Activated CD8-positive, alpha-beta T cell treated with anti-CD3 and anti-CD28 coated beads for 36 hours (primary cell): ENCODE measurements at regions of chr5 and their contacts with region 1.

Region 1: GRCh38 chr5:91311697-91312501 is 71.2 kb downstream of the ARRDC3 start:
- DNase-seq: peak; percentile 87
- ATAC-seq: peak; percentile 79
- H3K4me3 Mint-ChIP-seq: peak overlapping the region; percentile 75
- H3K27ac Mint-ChIP-seq: peak overlapping the region; percentile 90
- H3K4me1 Mint-ChIP-seq: peaks cover 45% of the 10 kb centered on the region
- H3K27me3 Mint-ChIP-seq: no peaks in the 10 kb centered on the region
- CTCF ChIP-seq: no peak

Region 2: GRCh38 chr5:90640484-90641059 is 671.3 kb before region 1 on chr5:
- CTCF ChIA-PET with region 1: no interaction called
- POLR2A ChIA-PET with region 1: no interaction called
- intact Hi-C with region 1: no loop called
- DNase-seq: no peak
- ATAC-seq: no peak
- H3K4me3 Mint-ChIP-seq: no peak overlapping the region
- H3K27ac Mint-ChIP-seq: no peak overlapping the region
- H3K4me1 Mint-ChIP-seq: no peaks in the 10 kb centered on the region
- H3K27me3 Mint-ChIP-seq: no peaks in the 10 kb centered on the region
- CTCF ChIP-seq: no peak

Region 3: DNA sequence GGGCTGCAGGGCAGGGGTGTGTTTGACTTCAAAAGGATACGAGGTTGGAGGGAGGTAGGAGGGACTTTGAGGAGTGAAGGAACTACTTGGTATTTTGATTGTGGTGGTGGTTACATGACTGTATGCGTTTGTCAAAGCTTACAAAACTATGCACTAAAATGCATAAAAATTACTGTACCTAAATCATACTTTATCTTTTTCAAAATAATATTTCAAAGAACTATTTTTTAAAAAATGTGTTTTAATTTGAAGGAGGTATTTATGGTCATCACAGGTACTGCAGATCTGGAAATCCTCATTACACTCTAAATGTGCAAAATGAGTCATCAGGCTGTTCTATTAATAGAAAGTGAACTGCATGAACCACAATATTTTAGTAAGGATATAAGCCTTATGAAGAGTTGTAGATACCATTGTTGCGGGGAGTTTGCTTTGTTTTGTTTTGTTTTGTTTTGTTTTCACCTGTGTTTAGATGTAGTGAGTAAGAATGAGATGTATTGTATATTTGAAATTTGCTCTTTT is 45.7 kb before region 1 on chr5:
- CTCF ChIA-PET with region 1: no interaction called
- POLR2A ChIA-PET with region 1: no interaction called
- intact Hi-C with region 1: loop called (anchors 5 kb)
- DNase-seq: no peak
- ATAC-seq: peak; percentile 87
- H3K4me3 Mint-ChIP-seq: no peak overlapping the region
- H3K27ac Mint-ChIP-seq: no peak overlapping the region
- H3K4me1 Mint-ChIP-seq: peaks cover 22% of the 10 kb centered on the region
- H3K27me3 Mint-ChIP-seq: no peaks in the 10 kb centered on the region
- CTCF ChIP-seq: peak; percentile 55

Region 4: DNA sequence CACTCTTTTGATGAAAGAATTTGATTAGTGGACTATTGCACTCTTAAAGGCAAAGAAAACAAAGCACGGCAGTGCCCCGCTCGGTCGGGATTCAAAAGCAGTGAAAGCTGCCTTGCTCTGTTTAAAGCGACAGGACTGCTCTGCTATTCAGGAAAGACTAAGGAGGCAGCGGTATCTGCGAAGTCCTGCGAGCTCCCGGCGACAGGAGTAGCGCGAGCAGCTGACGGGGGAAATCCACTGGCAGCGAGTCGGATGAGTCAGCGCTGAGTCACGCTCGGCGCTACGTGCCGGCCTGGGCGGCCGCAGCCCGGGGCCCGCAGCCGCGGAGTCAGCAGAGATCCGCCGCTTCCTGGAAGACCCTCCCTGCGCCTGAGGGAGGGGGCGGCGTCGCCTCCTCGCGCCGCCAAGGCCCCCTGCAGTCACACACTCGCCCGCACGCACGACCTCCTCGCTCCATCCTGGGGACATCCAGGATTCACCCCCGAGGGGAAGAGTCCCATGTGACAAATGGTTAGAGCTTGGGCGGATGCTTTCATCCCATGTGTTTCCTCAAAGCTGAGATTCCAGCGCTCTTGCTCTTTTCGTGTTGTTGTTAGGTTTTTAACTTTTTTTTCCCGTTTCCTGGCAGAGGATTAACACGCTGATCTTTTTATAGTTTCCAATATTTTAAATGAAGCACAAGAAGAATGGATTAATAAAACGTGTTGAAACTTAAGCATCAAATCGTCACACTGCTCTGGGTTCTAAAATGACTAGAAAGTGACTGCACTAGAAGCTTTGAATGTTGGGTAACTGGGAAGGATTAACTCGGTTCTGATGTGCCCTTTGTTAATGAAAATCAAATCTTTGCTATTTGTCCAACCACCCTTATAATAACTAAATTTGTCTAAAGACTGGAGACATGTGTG is 31.3 kb before region 1 on chr5:
- CTCF ChIA-PET with region 1: interaction called, 6 read pairs
- POLR2A ChIA-PET with region 1: interaction called, 10 read pairs
- intact Hi-C with region 1: loop called (anchors 2 kb)
- DNase-seq: peak; percentile 93
- ATAC-seq: peak; percentile 81
- H3K4me3 Mint-ChIP-seq: peak overlapping the region; percentile 85
- H3K27ac Mint-ChIP-seq: peak overlapping the region; percentile 98
- H3K4me1 Mint-ChIP-seq: peaks cover 47% of the 10 kb centered on the region
- H3K27me3 Mint-ChIP-seq: no peaks in the 10 kb centered on the region
- CTCF ChIP-seq: no peak

Region 5: DNA sequence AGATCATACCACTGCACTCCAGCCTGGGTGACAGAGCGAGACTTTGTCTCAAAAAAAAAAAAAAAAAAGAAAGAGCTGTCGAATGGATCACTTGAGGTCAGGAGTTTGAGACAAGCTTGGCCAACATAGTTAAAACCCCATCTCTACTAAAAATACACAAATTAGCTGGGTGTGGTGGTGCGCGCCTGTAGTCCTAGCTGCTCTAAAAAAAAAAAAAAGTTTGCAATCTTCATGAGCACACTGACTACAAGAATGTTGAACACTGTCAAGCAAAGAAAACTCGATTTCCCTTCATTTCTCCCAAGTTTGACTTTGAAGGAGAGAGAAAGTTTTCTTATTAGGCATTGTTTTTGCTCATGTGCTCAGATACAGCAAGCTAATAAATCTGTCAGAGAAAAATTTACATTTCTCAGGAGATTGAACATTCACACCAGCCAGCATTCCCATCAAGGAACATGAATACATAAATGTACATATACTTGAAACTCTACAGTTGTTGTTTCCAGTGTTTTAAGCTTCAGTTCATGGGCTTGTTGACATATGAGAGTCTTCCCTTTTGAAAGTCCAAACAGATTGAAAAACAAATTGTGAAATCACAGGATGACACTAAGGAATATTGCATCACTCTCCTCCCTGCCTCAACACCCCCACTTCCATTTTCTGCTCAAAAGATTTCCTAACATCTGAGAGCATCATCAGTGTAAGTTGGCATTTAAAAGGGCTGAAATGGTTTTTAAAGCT is 10.6 kb before region 1 on chr5:
- CTCF ChIA-PET with region 1: interaction called, 4 read pairs
- POLR2A ChIA-PET with region 1: interaction called, 11 read pairs
- intact Hi-C with region 1: no loop called
- DNase-seq: no peak
- ATAC-seq: no peak
- H3K4me3 Mint-ChIP-seq: no peak overlapping the region
- H3K27ac Mint-ChIP-seq: no peak overlapping the region
- H3K4me1 Mint-ChIP-seq: no peaks in the 10 kb centered on the region
- H3K27me3 Mint-ChIP-seq: no peaks in the 10 kb centered on the region
- CTCF ChIP-seq: no peak

Region 6: DNA sequence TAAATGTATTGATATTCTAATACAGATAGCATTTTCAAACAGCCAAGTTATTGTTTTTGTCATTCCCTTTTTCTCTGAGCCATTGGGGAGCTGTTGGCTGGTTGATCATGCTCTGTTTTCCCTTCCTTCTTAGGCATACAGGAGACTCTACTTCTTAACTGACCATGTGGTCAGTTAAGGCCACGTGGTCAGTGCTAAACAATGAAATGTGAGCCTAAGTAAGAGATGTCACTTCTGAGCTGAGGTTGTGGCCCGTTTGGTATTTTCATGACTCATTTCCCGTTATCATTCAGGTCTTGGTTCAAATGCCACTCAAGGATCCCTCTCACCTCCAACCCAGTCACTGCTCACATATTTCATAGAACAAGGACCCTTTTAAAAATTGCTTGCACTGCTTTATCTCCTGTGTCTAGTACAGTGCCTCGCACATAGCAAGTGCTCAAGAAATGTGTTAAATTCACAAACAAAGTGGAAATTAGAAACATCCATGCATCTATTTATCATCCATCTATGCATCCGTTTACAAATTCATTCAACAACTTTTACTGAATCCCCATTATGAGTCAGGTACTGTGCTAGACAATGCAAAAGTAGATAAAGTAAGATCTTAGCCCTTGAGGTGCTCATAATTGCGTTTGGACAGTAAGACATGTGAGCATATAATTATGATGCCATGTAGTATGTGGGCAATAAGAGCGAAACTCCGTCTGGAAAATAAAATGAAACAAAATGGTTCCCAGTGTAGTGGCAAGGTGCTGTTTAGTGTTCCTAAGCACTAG is 20.6 kb after region 1 on chr5:
- CTCF ChIA-PET with region 1: no interaction called
- POLR2A ChIA-PET with region 1: interaction called, 7 read pairs
- intact Hi-C with region 1: loop called (anchors 1 kb)
- DNase-seq: peak; percentile 72
- ATAC-seq: peak; percentile 92
- H3K4me3 Mint-ChIP-seq: no peak overlapping the region
- H3K27ac Mint-ChIP-seq: peak overlapping the region; percentile 43
- H3K4me1 Mint-ChIP-seq: peaks cover 23% of the 10 kb centered on the region
- H3K27me3 Mint-ChIP-seq: no peaks in the 10 kb centered on the region
- CTCF ChIP-seq: no peak

Region 7: GRCh38 chr5:91361055-91361701 is 49.3 kb after region 1 on chr5:
- CTCF ChIA-PET with region 1: no interaction called
- POLR2A ChIA-PET with region 1: no interaction called
- intact Hi-C with region 1: loop called (anchors 5 kb)
- DNase-seq: peak; percentile 26
- ATAC-seq: peak; percentile 79
- H3K4me3 Mint-ChIP-seq: peak overlapping the region; percentile 18
- H3K27ac Mint-ChIP-seq: peak overlapping the region; percentile 75
- H3K4me1 Mint-ChIP-seq: peaks cover 14% of the 10 kb centered on the region
- H3K27me3 Mint-ChIP-seq: peaks cover 3% of the 10 kb centered on the region
- CTCF ChIP-seq: no peak